Left colon (tissue), 2 donors: ENCODE measurements at regions of chr2 and their contacts with region 1.

Region 1: DNA sequence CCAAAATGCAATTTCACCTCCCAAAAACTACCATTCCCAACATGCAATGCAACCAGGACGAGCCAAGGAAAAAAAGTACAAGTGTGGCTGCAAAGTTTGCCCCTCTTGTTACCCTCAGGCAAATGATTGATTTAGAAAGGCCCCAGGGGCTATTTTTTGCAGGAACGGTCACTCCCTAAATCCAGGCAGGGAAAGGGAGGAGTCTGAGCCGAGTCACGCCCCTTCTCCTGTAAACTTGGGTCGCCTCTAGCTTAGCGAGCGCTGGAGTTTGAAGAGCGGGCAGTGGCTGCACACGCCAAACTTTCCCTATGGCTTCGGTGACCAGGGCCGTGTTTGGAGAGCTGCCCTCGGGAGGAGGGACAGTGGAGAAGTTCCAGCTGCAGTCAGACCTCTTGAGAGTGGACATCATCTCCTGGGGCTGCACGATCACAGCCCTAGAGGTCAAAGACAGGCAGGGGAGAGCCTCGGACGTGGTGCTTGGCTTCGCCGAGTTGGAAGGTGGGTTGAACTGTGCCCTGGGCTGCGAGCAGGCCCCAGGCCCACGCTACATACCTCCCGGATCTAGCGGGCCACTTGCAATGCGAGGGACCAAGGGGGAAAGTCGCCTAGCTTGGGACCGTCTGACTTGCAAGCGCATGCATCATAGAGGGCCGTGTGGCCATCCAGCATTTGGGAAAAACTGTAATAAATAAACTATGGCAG is at the start of gene GALM:
- DNase-seq: peak; percentile 84 to 88
- ATAC-seq: peak; percentile 86
- total RNA-seq, gene GALM: 51.6 to 59.0 TPM

Region 2: DNA sequence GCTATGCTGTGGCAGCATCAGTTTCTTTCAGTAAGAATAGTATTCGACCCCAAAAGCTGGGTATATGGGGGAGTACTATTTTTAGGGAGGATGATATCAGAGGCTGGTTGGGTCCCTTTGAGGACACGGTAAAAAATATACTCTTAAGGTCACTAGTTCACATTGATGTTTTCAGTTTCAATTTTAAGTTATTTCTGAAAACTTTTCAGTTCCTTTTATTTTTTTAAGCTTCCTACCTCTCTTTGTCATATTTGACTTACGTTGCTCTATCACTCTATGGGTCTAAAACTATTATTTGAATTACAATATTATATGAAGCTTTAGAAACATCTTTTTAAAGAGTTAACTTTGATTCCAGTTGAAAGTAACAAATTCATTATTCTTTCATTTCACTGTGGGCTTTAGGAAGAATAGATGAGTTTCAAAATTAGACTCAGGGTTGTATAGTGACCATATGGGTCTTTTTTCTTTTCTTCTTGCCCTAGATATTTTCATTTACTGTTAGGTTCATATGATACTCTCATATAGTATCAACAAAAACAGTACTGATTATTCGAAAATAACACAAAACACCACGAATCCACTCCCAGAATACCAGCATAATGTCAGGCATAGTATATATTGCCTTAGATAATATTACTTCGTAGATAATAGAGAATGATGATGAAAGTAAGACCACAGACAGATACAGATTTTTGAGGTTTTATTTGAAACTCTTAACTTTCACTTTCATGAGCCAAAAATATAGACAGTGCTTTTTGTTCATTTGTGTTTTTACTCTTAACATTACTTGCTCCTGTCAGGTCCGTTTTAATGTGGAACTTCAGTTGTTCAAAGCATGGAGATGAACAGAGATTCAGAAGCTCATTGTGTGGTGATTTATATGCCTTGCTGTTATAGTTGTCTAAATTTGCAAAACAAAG is 731.2 kb before region 1 on chr2:
- intact Hi-C with region 1: no loop called
- DNase-seq: no peak
- ATAC-seq: no peak

Region 3: DNA sequence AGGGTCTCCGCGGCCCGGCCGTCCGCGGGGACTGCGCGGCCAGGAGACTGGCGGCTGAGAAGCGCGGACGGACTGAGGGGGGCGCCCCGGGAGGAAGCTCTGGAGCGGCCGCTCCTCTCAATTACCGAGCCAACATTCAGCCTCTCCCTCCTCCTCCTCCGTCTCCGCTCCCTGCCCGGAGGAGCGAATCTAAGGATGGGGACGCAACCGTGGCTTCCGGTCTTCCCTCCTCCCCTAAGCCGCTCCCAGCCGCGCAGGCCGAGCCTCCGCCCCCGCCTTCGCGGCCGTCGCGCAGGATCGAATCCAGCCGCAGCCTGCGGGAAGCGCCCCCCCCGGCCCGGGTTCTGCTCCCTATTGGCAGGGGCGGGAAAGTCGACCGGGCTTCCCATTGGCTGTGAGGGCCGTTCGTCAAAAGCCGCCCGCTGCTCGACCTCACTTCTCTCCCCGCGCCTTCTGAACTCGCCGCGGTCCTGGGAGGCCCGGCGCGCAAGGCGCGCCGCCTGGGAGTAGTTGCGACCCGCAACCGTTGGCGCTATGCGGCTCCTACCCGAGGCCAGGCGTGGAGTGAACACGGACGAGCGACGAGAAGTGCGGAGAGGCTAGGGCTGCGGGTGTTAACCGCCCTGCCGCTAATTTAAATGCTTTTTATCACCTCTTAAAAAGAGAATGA is 63.1 kb before region 1 on chr2 and contains the start of gene HNRNPLL:
- intact Hi-C with region 1: loop called in 1 of 2 experiments (anchors 5 kb)
- DNase-seq: peak; percentile 98
- ATAC-seq: peak; percentile 91
- total RNA-seq, gene HNRNPLL: 43.3 to 45.8 TPM